ENCODE measurements at regions of chr19 and their contacts with region 1.

Region 1: GRCh38 chr19:1039646-1040475 is at the start of gene ABCA7:
- DNase-seq: peak; percentile 93 to 100 (median 98)

Region 2: GRCh38 chr19:1020868-1021425 is 18.9 kb before region 1 on chr19 and contains the start of gene TMEM259:
- intact Hi-C with region 1: loop called (anchors 2 kb)
- DNase-seq: peak; percentile 95 to 100 (median 98)

Region 3: DNA sequence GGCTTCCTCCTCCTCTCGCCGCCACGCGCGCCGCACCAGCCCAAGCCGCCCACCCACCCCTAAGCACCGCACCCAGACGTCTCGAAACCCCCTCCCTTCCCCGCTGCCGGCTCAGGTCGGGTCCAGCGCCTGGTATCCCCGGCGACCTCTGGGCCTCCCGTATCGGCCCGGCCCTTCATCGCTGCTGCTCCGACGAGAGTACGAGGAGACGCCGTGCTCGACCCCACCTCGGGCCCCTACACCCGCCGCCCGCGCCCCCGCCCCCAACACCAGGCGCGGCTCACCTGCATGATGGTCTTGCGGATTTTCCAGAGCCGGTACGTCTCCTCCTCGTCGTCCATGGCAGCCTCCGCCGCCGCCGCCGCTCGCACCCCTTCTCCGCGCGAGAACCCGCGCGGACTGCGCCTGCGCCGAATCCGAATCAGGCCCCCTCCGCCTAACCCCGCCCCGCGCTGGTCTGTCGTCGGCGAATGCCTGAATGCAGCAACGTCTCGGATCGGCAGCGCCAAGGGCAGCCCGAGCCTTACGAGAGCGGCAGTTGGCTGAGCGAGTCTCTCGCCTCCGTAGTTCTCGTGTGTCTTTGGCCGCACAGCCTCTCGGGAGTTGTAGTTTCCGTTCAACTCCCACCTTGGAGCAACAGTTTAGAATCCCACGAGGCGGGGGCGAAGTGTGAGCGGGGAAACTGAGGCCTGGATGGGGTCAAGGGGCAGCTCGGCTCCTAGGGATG is 55.3 kb after region 1 on chr19 and contains the start of gene POLR2E:
- intact Hi-C with region 1: loop called (anchors 10 kb)
- DNase-seq: peak; percentile 98 to 100 (median 99)

Region 4: DNA sequence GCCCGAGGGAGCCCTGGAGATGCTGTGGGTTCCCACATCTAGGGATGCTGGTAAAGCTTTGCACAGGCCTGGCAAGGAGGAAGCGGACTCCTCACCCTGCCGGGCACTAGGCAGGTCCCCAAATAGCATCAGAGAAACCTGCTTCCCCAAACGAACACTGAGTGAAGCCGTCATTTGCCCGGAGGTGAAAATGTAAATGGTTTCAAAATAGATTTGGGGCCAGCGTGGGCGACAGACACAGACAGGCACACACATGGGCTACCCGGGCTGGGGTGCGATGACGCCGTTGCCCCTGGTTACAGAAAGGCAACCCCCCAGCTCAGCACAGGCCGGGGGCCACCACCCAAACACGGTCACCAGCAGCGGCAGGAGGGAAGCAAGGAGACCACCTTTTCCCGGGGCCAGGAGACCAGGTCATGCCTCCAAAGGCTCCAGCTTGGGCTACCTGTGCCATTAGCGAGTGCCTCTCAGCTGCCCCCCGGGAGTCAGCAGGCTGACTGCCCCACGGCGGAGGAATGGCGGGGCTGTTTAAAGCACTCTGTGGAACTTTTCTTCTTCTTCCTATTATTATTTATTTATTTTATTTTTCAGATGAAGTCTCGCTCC is 296.3 kb after region 1 on chr19:
- intact Hi-C with region 1: no loop called
- DNase-seq: no peak